CD4-positive, alpha-beta T cell (primary cell): ENCODE measurements at regions of chr12 and their contacts with region 1.

Region 1: DNA sequence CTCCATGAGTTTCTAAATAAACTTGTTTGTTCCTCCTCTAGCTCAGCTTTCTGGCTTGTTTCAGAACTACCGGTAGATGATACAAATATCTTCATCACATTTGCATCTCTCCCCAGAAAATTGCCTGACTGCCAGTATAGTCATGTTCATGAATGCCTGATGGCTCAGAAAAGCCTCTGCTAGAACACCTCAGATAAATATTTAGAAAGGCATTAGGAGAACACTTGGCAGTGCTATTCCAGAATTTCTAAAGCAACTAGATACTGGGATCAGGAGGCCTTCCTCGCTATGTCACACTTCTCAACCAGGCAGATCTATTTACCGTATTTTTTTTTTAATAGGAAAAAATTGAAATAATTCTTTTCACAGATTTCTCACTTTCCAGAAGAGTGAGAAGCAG is 32.3 kb upstream of the KRAS start:
- DNase-seq: no peak
- ATAC-seq: no peak
- H3K4me3 ChIP-seq: no peak overlapping the region
- H3K4me3 Mint-ChIP-seq: peak overlapping the region; percentile 30
- H3K27ac ChIP-seq: no peak overlapping the region
- H3K27ac Mint-ChIP-seq: peak overlapping the region; percentile 69
- H3K4me1 ChIP-seq: peaks cover 17% of the 10 kb centered on the region
- H3K4me1 Mint-ChIP-seq: peaks cover 47% of the 10 kb centered on the region
- H3K27me3 ChIP-seq: no peaks in the 10 kb centered on the region
- H3K27me3 Mint-ChIP-seq: no peaks in the 10 kb centered on the region
- CTCF ChIP-seq: no peak

Region 2: DNA sequence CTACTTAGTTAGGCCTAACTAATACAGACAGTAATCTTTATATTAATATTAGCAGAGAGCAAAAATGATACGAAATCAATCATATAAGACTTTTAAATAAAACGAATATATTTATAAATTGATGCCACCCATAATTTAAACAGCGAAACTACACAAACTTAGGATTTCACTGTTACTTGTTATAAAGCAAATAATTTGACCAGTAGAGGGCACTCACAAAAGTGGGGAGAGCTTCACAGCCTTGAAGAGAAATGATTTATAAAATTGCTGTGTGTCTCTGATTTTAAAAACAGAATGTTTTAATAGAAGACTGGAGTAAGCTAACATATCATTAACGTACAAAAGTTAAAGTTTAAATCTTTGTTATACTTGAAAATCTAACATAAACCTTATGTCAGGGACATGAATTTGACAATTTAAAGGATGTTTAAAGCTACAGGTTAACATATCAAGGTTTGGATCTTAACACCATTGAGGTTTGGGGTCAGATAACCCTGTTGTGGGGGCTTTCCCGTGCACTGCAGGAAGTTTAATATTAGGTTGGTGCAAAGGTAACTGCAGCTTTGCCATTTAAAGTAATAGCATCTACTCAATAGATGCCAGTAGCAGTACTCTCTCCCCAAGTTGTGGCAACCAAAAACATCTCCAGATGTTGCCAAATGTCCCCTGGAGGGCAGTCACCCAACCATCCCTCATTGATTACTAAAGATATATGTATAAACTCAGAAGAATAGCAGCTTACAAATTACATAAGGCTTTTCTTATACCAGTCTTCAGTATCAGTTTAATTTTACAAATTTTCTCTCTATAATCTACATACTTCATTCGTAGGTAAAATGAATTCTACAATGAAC is 41.6 kb before region 1 on chr12:
- CTCF ChIA-PET with region 1: no interaction called
- POLR2A ChIA-PET with region 1: no interaction called
- intact Hi-C with region 1: loop called in 1 of 2 experiments (anchors 5 kb)
- DNase-seq: peak in 4 of 14 experiments; percentile 1 to 77 (median 74)
- ATAC-seq: peak; percentile 79
- H3K4me3 ChIP-seq: no peak overlapping the region
- H3K4me3 Mint-ChIP-seq: no peak overlapping the region
- H3K27ac ChIP-seq: peak overlapping the region in 1 of 2 donors; percentile 25
- H3K27ac Mint-ChIP-seq: peak overlapping the region; percentile 24
- H3K4me1 ChIP-seq: peaks cover 5% of the 10 kb centered on the region
- H3K4me1 Mint-ChIP-seq: peaks cover 51% of the 10 kb centered on the region
- H3K27me3 ChIP-seq: no peaks in the 10 kb centered on the region
- H3K27me3 Mint-ChIP-seq: no peaks in the 10 kb centered on the region
- CTCF ChIP-seq: peak; percentile 82